HEK293 (cell line): ENCODE measurements at regions of chr21 and their contacts with region 1.

Region 1: DNA sequence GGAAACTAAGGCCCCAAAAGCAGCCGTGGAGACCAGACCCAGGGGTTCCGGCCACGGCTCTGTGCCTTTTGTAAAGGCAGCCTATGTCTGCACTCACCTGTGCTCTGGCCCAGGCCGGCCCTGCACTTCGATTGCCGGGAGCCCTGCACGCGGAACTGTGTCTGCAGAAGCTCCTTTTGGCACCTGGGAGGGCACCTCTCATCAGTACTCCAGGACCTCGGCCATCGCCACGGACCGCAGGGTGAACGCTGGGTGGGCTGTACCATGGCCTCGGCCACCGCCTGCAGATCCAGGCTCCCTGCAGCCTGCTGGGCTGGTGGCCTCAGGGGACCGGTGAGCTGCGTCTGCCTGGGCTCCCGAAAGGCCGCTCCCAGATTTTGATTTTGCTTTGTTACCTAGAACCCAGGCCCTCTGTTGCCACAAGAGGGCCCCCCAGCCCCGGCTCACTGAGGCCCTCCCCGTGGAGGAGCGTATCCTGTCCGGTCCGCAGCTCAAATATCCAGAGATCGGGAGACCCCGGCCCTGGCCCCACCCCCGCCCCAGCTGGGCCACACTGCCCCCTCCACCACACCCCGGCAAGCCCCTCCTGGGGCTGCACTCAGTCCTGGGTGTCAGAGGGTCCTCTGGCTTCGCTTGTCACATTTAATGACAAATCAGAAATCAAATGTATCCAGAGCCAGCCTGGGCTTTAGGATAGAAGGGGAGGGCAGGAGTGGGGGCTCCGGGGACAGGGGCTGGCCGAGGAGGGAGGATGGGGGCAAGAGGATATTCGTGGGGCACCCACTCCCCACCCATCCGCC is 60.2 kb upstream of the PDE9A start:
- H3K4me3 ChIP-seq: no peak overlapping the region
- H3K27ac ChIP-seq: no peak overlapping the region
- H3K4me1 ChIP-seq: no peaks in the 10 kb centered on the region
- CTCF ChIP-seq: peak; percentile 87

Region 2: GRCh38 chr21:42337830-42338728 is 255.1 kb before region 1 on chr21:
- CTCF ChIA-PET with region 1: no interaction called
- POLR2A ChIA-PET with region 1: no interaction called
- H3K4me3 ChIP-seq: no peak overlapping the region
- H3K27ac ChIP-seq: no peak overlapping the region
- H3K4me1 ChIP-seq: no peaks in the 10 kb centered on the region
- CTCF ChIP-seq: no peak

Region 3: DNA sequence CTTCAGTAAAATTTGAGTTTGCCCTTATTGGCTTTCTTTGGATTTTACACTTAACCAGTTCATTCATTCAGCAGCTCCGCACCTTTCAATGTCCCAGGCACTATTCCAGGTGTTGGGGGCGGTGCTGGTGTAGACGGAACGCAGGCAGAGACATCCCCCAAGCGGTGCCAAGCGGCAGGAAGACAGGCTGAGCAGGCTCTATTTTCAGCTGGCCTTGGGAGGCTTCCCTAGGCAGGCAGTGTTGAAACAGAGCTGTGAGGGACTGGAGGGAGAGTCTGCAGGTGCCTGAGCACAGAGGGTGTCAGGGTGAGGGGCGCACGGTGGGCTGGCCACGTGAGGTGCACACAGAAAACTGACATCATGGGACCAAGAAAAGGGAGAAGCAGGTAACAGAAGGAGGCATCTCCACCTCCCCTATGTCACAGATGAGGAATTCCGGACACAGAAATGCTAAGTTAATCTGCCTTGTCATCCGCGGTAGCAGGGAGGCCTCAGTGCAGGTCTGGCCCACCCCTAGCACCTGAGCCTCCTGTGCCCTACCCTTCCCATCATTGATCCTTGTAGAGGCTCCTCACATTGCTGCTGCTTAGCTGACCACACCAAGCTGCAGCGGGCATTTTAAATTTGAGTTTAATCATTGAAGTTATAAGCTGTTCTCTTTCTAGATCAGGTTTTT is 38.8 kb before region 1 on chr21:
- CTCF ChIA-PET with region 1: no interaction called
- POLR2A ChIA-PET with region 1: no interaction called
- H3K4me3 ChIP-seq: no peak overlapping the region
- H3K27ac ChIP-seq: no peak overlapping the region
- H3K4me1 ChIP-seq: no peaks in the 10 kb centered on the region
- CTCF ChIP-seq: no peak

Region 4: DNA sequence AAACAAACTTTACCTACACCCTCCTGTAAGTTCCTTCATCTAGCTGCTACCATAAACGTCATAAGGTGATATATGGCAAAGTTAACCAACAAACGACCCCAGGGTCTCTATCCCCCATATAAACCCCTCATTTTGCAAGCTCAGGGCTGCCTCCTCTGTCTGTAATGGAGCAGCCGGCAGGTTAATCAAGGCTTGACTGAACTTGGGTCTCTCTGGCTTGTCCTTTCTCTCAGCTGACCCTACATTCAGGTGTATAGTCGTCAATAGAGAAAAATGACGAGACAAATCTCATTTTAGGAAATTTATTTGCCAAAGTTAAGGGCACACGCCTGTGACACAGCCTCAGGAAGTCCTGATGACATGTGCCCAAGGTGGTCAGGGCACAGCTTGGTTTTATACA is 218.8 kb after region 1 on chr21:
- CTCF ChIA-PET with region 1: interaction called, 35 read pairs
- POLR2A ChIA-PET with region 1: no interaction called
- H3K4me3 ChIP-seq: no peak overlapping the region
- H3K27ac ChIP-seq: no peak overlapping the region
- H3K4me1 ChIP-seq: no peaks in the 10 kb centered on the region
- CTCF ChIP-seq: no peak

Region 5: GRCh38 chr21:42818328-42818749 is 225.1 kb after region 1 on chr21:
- CTCF ChIA-PET with region 1: interaction called, 35 read pairs
- POLR2A ChIA-PET with region 1: no interaction called
- H3K4me3 ChIP-seq: no peak overlapping the region
- H3K27ac ChIP-seq: no peak overlapping the region
- H3K4me1 ChIP-seq: no peaks in the 10 kb centered on the region
- CTCF ChIP-seq: no peak